ENCODE measurements at regions of chr22 and their contacts with region 1.

Region 1: GRCh38 chr22:37817705-37818408 is 5.3 kb upstream of the GALR3 start:
- DNase-seq: peak; percentile 89
- ATAC-seq: peak; percentile 86
- H3K4me3 Mint-ChIP-seq: no peak overlapping the region
- H3K27ac Mint-ChIP-seq: no peak overlapping the region
- H3K4me1 Mint-ChIP-seq: peaks cover 8% of the 10 kb centered on the region
- H3K27me3 Mint-ChIP-seq: peaks cover 16% of the 10 kb centered on the region

Region 2: GRCh38 chr22:37855462-37855861 is 37.6 kb after region 1 on chr22:
- CTCF ChIA-PET with region 1: interaction called, 12 read pairs
- POLR2A ChIA-PET with region 1: no interaction called
- intact Hi-C with region 1: no loop called
- DNase-seq: no peak
- ATAC-seq: no peak
- H3K4me3 Mint-ChIP-seq: no peak overlapping the region
- H3K27ac Mint-ChIP-seq: peak overlapping the region; percentile 28
- H3K4me1 Mint-ChIP-seq: peaks cover 33% of the 10 kb centered on the region
- H3K27me3 Mint-ChIP-seq: no peaks in the 10 kb centered on the region

Region 3: DNA sequence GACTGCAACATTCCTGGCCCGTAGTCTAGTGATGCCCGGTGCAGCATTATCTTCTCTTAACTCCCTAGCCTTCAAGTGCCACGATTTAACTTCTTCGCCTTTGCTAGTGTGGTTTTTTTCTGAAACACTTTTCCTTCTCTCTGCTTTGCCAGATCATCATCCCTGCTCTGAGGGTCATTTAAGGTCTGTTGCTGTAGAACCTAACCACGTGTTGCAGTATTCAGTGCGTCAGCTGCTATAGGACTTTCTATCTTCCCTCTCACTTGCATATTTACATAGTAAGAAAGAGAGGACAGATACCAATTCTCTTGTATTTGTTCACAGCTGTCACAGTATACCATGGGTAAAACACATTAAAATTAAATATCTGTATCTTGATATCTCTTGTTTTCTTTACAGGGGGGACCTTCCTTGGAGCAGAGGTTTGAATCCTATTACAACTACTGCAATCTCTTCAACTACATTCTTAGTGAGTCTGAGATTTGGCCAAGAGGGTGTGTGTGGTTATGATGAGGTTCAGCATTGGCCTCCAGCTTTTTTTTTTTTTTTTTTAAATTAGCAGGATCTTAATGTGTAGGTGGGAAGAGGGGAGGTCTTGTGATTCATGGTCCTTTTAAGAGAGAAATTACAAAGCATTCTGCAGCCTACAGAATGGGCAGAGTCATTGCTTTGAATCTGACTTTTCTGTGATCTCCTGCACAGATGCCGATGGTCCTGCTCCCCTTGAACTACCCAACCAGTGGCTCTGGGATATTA is 44.9 kb after region 1 on chr22:
- CTCF ChIA-PET with region 1: interaction called, 51 read pairs
- POLR2A ChIA-PET with region 1: interaction called, 8 read pairs
- intact Hi-C with region 1: loop called (anchors 1 kb)
- DNase-seq: no peak
- ATAC-seq: peak; percentile 39
- H3K4me3 Mint-ChIP-seq: no peak overlapping the region
- H3K27ac Mint-ChIP-seq: peak overlapping the region; percentile 26
- H3K4me1 Mint-ChIP-seq: peaks cover 9% of the 10 kb centered on the region
- H3K27me3 Mint-ChIP-seq: no peaks in the 10 kb centered on the region

Region 4: GRCh38 chr22:37905534-37906363 is 87.9 kb after region 1 on chr22 and contains the start of gene MICALL1:
- CTCF ChIA-PET with region 1: no interaction called
- POLR2A ChIA-PET with region 1: no interaction called
- intact Hi-C with region 1: loop called in 1 of 2 experiments (anchors 1 kb)
- DNase-seq: peak; percentile 80
- ATAC-seq: peak; percentile 86
- H3K4me3 Mint-ChIP-seq: peak within 1 kb of the TSS; percentile 72
- H3K27ac Mint-ChIP-seq: peak within 1 kb of the TSS; percentile 79
- H3K4me1 Mint-ChIP-seq: peaks cover 21% of the 10 kb centered on the region
- H3K27me3 Mint-ChIP-seq: no peaks in the 10 kb centered on the region
- total RNA-seq, gene MICALL1: 11.2 to 11.8 TPM

Region 5: DNA sequence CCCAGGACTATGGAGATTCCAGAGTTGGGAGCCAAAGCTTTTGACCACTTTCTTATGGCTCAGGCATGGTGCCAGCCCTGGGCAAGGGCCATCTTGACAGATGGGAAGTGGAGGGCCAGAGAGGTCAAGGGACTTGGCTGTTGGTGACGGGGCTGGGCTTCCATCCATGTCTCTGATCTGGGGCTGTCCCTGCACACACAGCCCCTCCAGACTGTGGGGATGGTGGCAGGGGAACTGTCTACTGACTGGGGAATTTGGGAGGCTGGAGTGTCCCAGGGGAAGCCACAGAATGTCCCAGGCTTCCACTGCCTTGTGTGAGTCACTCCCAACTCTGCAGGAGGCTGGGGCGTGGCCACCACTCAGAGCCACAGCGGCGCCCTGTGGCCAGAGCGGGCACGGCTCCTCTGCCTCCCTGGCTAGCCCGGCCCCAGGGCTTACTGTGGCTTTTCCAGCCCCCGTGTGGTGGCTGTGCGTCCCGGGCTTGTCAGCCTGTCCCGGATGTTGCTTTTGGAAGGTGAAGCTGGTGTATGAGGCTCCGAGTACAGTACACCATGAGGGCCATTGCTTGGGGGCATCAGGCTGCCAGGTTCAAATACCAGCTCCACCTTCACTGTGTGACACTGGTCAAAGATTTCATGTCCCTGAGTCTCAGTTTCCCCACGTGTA is 116.0 kb after region 1 on chr22:
- CTCF ChIA-PET with region 1: interaction called, 20 read pairs
- POLR2A ChIA-PET with region 1: no interaction called
- intact Hi-C with region 1: loop called (anchors 1 kb)
- DNase-seq: peak; percentile 94
- ATAC-seq: peak; percentile 100
- H3K4me3 Mint-ChIP-seq: no peak overlapping the region
- H3K27ac Mint-ChIP-seq: no peak overlapping the region
- H3K4me1 Mint-ChIP-seq: peaks cover 11% of the 10 kb centered on the region
- H3K27me3 Mint-ChIP-seq: no peaks in the 10 kb centered on the region

Region 6: GRCh38 chr22:37965940-37966664 is 148.2 kb after region 1 on chr22:
- CTCF ChIA-PET with region 1: interaction called, 14 read pairs
- POLR2A ChIA-PET with region 1: interaction called, 3 read pairs
- intact Hi-C with region 1: loop called in 1 of 2 experiments (anchors 1 kb)
- DNase-seq: no peak
- ATAC-seq: no peak
- H3K4me3 Mint-ChIP-seq: no peak overlapping the region
- H3K27ac Mint-ChIP-seq: no peak overlapping the region
- H3K4me1 Mint-ChIP-seq: no peaks in the 10 kb centered on the region
- H3K27me3 Mint-ChIP-seq: no peaks in the 10 kb centered on the region

Measured in activated CD4-positive, alpha-beta T cell treated with anti-CD3 and anti-CD28 coated beads for 36 hours (primary cell).